ENCODE measurements at regions of chr4 and their contacts with region 1.

Region 1: DNA sequence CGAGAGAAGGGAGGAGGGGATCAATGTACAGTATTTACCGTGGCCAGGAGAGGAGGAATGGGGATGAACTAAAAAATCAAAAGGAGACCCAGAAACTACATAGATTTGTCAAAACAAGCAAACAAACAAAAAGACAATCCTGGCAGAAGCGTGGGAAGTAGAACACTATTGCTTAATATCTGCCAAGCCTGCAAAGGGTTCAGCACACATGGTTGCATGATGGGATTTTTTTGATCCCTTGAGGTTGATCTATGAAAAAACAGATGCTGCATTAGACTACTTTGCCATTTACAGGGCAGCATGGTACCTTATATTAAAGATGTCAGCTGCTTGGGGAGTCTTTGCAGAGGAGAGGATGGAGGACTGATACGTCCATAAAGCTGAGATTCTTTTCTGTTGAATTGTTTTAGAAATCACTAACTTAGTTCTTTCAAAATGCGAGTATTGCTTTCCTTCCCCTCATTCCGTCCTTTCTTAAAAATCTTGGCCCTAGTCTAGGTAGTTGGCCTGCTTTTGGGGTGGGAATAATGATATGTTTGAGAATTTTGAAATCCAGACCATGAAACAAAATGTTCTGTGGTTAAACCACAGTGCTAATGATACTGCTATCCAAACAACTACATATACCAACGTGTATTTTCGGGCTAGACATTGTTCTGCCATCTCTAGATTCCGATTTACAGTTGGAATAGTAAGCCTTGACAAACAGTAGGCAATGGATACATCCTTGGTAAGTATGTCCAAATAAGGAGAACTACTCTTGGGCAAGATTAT is 39.6 kb upstream of the TMEM150C start:
- DNase-seq: no peak

Region 2: DNA sequence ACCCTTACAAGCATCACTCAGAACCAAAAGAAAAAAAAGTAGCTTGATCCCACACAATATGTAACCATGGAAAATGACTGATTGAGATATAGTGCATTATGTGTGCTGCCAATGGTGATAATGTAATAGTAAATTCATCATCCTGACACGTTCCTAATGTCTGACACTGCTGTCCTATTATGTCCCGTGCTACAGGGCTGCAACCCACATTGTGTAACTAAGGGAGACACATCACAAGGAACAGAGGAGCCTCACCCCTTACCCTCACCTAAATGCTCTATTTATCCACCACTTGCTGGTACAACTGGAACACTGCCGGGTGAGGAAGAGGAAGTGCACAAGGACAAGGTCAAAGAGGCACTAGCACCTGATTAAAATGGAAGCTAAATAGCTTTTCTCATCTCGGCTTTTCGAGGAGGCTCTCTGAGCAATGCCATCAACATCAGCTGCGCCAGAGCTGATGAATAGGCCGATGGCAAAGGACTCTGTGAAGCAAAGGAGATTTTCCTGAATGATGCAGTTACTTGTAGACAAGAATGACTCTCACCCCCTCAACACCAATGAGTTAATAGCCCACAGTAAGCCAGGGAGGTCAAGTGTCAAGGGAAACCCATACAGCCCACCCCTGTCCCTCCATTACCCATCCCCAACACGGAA is 409.3 kb before region 1 on chr4:
- intact Hi-C with region 1: no loop called
- DNase-seq: no peak

Region 3: DNA sequence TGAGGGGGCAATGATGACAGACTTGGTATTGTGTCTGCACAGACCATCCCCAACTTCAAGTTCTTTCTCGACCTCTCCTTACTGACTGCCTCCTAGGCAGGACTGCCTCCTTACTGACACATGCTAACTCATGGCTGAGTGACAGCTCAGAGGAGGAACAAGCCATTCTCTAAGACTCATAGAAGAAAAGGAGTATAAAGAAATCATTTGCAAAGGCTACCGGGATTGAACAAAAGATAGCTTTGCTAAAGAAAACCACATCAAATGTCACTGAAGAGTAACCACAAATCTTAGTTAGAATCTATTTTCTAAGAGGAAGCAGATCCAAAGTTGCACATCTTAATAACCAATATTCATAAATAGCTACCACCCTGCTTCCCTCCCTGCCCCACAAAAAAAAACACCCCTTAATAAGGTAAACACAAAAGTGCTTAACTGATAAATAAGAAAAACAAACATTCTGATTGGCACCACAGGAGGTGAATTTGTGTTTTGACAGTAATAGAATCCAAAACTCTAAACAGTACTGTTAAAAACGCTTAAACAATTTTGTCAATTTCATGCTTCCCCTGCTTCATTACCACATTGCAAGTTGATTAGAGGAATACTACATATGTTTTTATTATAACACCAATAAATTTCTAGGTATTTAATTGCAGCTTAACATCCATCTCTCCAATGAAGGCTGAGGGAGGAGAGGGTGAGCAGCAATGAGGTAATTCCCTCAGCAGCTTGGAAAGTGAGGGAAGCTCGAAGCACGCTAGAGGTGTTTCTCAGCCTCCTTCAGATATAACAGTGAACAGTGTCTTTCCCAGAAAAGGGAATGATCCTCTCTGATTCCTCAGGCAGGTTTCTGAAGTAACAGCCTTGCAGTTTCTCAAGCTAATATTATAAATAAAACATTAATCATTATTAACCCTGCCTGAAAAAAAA is 387.7 kb before region 1 on chr4:
- intact Hi-C with region 1: no loop called
- DNase-seq: no peak

Region 4: DNA sequence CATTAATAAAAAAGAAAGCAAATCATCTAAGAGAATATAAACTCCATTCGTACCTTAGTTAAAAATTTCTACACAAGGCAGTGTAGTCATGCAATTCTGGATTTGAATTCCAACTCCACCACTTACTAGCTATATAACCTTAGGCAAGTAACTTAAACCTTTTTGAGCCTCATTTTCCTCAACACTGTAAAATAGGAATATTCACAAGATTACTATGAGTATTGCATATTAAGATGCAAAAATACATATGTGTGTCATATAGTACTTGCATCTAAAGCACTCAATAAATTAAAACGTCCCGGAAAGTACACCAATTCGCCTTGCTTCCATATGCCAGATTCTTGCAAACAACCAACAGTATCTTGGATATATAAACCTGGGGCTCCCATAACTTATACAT is 269.6 kb before region 1 on chr4:
- intact Hi-C with region 1: no loop called
- DNase-seq: no peak

Region 5: DNA sequence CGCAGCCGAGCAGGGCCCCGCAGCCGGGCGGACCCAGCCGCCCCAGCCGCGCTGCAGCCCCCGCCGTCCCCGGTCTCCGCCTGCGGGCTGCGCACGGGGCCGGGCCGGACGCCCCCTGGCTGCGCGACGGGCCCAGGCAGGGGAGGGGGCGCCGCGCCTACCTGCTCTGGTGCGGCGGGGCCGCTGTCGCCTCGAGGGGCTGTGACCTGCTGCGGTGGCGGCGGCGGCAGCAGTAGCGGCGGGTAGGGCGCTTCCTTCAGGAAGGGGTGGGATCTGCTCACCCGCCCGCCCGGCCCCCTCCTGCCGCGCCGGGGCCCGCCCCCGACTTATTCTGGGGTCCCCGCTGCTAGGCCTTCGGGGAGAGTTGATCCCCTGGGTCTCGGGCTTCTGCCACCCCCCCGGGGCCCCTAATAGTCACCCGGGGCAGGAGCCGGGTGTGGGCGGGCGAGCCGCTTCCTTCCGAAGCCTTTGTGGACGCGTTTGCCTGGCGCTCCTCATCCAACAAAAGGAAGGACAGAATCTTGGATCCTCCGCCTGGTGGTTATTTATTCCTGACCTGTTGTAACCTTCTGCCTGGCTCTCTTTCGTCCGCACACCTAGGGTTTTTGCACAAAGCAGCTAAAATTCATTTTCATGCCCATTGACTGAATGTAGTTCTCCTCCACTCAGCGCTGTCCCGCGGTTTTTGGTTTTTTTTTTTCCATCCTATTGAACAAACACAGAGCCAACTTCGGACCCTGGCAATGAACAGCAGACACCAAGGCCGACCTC is 39.5 kb before region 1 on chr4 and contains the start of gene TMEM150C:
- intact Hi-C with region 1: loop called in 1 of 2 experiments (anchors 1 kb)
- DNase-seq: no peak
- total RNA-seq, gene TMEM150C: 6.9 to 9.7 TPM

Region 6: DNA sequence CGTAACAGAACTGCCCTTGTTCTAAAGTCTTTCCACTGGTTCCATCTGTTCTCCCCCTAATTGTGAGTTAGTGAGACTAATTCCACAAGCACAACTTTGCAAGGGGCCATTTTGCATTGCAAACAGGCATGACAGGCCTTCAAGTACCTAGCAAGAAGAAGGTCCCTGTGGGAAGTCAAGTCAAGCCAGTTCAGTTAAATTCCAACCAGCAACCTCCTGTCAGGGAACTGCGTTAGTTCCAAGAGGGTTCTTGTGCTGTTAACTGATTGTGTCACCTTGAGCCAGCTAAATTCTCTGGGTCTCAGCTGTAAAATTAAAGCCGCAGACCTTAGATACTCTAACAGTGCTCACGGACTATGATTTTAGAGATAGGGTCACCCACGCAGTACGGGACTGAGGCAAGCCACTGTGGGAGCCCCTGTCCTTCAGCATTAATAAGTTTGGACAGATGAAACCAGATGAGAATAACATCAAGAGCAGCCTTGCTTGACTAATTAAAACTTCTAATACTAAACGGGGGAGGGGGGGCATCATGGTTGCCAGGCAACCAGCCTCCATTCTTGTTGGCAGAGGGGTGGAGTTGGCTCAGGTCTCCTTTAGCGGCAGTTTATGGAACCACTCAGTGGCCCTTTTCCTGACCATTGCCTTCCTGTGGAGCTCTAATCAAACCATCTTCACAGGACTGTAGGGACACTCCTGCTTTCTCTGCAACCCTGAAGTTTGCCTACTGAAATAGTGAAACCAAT is 15.6 kb before region 1 on chr4:
- intact Hi-C with region 1: no loop called
- DNase-seq: no peak